HEK293 (cell line): ENCODE measurements at regions of chr9 and their contacts with region 1.

Region 1: GRCh38 chr9:34403554-34404380 is 27.1 kb upstream of the MYORG start:
- H3K4me3 ChIP-seq: no peak overlapping the region
- H3K27ac ChIP-seq: no peak overlapping the region
- H3K4me1 ChIP-seq: no peaks in the 10 kb centered on the region
- CTCF ChIP-seq: peak; percentile 65

Region 2: DNA sequence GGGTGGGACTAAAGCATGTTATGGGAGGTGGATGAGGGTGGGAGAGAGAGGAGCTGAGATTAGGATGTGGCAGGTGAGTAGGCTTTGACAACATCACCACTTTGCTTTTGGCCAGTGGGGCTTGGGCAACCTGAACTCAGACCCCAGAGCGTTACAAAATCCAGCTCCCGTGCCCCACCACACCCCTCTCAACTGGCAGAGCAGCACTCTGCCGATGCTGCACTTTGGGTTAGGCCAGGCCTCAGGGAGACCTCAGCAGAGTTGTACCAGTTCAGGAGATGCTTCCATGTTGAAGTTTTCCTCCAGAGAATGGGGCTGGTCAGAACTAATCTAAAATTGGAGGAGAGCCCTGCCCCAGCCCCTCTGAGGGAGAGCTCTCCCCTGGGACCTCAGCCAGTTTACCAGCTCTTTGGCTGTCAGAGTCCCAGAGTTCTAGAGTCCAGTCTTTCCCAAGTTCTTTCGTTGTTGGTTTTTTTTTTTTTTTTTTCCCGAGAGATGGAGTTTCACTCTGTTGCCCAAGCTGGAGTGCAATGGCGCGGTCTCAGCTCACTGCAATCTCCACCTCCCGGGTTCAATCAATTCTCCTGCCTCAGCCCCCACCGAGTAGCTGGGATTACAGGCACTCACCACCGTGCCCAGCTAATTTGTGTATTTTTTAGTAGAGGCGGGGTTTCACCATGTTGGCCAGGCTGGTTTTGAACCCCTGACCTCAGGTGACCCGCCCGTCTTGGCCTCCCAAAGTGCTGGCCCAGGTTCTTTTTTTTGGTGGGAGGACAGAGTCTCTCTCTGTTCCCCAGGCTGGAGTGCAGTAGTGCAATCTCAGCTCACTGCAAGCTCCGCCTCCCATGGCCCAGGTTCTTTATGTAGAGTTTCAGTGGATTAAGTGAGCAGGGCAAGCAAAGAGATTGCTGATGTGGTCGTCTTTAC is 56.6 kb before region 1 on chr9:
- CTCF ChIA-PET with region 1: interaction called, 10 read pairs
- POLR2A ChIA-PET with region 1: no interaction called
- H3K4me3 ChIP-seq: no peak overlapping the region
- H3K27ac ChIP-seq: no peak overlapping the region
- H3K4me1 ChIP-seq: no peaks in the 10 kb centered on the region
- CTCF ChIP-seq: no peak

Region 3: DNA sequence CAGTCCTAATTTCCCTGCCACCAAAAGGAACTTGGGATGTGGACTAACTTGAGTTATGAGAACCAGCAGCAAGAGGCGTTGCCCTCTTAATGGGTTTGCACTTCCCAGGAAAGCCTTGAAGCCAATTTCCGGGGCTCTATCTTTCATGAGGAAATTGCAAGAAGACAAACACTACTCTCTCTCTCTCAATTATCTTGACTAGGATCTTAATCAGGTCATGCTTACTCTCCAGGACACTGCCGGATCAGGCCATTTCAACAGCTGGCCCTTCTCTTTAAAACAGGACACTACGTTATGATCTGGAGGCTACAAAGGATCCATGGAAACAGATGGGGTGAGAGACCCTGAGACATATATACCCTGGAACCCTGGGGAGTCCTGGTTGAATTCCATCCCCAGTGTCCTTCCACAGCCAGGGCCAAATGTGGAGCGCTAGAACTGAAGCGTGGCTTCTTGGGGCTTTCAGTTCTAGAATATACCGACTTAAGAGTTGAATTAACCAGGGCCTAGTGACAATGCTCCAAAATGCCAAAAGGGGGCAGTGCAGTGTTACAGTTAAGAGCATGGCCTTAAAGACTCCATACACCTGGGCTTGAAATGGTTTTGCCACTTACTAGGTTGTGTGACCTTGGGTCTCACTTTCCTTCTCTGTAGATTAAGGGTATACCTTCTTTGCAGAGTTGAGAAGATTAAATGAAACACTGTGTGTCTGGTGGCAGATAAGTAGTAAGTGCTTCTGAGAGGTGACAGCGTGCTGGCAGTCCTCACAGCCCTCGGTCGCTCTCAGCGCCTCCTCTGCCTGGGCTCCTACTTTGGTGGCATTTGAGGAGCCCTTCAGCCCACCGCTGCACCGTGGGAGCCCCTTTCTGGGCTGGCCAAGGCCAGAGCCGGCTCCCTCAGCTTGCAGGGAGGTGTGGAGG is 33.5 kb after region 1 on chr9:
- CTCF ChIA-PET with region 1: interaction called, 33 read pairs
- POLR2A ChIA-PET with region 1: no interaction called
- H3K4me3 ChIP-seq: no peak overlapping the region
- H3K27ac ChIP-seq: no peak overlapping the region
- H3K4me1 ChIP-seq: no peaks in the 10 kb centered on the region
- CTCF ChIP-seq: 0 out of 2 replicates have a peak, but pooled peaks have one; percentile 14

Region 4: DNA sequence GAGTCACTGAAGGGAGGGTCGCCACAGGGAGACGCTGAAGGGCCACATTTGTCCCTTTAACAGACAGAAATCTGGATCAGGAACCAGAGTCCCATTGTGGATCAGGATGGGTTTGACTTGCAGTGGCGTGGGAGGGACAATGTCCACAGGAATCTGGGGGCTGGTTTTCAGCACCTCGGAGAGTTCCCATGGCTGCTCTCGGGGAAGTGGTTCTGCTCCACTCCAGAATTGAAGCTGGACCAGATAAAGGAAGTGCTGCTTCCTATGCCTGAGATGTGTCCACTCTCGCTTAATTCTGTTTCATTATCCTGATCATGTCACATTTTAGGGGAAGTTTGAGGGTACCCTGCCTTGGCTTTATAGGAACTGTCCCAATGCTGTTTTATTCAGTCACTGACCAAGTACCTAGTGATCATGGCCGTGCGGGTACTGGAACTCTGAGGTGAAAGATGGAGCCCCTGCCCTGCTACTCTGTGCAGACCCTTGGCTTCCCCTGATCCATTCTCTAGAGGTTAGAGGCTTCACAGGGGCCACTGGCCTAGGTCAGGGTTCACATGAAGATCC is 90.3 kb after region 1 on chr9:
- CTCF ChIA-PET with region 1: interaction called, 132 read pairs
- POLR2A ChIA-PET with region 1: no interaction called
- H3K4me3 ChIP-seq: no peak overlapping the region
- H3K27ac ChIP-seq: no peak overlapping the region
- H3K4me1 ChIP-seq: no peaks in the 10 kb centered on the region
- CTCF ChIP-seq: no peak

Region 5: DNA sequence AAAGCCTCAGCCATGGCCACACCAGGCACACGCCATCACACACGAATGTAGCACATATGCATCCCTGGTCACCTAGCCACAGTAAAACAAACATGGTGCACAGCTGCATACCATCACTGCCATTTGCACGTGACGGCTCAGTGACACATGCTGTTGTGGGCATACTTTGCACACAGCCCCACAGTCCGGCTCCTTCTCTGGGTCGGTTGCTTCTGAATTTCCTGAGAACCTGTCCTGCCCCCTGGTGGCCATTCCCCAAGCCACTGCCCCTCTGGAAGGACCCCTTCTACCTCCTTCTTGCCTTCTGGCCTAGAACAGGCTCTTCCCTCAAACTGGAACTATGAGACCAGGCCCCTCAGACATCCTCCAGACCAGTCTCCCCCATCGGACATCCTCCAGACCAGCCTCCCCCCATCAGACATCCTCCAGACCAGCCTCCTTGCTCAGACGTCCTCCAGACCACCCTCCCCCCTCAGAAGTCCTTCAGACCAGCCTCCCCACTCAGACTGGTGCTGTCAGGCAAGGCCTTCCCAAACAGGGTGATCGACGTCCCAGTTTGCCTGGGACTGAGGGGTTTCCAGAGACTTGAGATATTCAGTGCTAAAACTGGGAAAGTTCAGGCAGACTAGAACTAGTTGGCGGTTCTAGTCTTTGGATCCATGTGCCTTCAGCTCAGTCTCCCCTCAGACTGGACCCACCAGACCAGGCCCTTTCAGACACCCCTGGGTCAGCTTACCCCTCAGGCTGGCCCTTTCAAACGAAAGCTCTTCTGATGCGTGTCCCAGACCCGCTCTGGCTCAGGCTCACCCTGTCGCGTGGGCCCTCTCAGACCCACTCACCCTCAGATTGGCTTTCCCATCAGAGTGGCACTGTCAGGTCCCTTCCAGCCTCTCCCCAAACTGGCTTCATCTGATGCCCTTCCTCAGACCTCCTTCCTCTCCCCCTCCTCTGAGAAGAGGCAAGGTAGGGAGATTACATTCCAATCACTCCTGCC is 143.4 kb after region 1 on chr9:
- CTCF ChIA-PET with region 1: interaction called, 40 read pairs
- POLR2A ChIA-PET with region 1: no interaction called
- H3K4me3 ChIP-seq: no peak overlapping the region
- H3K27ac ChIP-seq: no peak overlapping the region
- H3K4me1 ChIP-seq: no peaks in the 10 kb centered on the region
- CTCF ChIP-seq: peak; percentile 38; the same call in 1 of the 2 replicates

Region 6: DNA sequence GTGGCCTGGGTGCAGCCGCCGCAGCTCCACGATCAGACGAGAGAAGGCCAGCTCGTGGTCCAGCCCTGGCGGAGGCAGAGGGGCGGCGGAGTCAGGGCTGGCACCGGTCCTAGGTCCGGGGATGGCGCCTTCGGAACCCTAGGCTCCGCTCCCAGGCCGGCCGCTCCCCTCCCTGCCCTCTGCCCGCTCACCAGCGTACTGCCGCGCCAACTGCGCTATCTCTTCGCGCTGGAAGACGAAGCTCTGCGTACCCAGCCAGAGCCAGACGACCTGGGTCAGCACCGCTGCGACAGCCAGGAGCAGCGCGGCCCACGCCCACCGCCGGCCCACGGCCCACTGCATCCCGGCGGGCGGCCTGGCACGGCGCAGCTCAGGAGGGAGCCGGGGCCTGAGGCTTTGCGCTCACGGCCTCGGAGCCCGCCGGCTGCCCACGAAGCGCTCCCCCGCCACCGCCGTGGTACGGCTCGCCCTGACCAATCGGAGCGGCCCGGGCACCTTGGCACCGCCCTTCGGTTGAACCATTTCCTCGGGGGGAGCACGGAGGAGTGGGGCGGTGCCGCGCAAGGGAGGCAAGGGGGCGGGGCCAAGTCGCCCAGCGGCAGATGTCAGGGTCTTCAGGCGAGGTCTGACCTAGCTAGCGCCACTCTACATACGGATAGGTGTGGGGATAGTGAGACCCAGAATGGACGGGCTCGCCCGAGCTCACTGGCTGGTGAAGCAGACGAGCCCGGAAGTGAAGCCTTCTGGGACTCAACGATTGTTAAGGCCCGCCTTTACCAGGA is 233.8 kb after region 1 on chr9 and contains the start of gene SIGMAR1:
- CTCF ChIA-PET with region 1: interaction called, 14 read pairs
- POLR2A ChIA-PET with region 1: no interaction called
- H3K4me3 ChIP-seq: peak within 1 kb of the TSS; percentile 67
- H3K27ac ChIP-seq: peak within 1 kb of the TSS; percentile 77
- H3K4me1 ChIP-seq: no peaks in the 10 kb centered on the region
- CTCF ChIP-seq: peak; percentile 20; the same call in 1 of the 2 replicates